Left cardiac atrium (tissue), 4 donors: ENCODE measurements at regions of chr1 and their contacts with region 1.

Region 1: DNA sequence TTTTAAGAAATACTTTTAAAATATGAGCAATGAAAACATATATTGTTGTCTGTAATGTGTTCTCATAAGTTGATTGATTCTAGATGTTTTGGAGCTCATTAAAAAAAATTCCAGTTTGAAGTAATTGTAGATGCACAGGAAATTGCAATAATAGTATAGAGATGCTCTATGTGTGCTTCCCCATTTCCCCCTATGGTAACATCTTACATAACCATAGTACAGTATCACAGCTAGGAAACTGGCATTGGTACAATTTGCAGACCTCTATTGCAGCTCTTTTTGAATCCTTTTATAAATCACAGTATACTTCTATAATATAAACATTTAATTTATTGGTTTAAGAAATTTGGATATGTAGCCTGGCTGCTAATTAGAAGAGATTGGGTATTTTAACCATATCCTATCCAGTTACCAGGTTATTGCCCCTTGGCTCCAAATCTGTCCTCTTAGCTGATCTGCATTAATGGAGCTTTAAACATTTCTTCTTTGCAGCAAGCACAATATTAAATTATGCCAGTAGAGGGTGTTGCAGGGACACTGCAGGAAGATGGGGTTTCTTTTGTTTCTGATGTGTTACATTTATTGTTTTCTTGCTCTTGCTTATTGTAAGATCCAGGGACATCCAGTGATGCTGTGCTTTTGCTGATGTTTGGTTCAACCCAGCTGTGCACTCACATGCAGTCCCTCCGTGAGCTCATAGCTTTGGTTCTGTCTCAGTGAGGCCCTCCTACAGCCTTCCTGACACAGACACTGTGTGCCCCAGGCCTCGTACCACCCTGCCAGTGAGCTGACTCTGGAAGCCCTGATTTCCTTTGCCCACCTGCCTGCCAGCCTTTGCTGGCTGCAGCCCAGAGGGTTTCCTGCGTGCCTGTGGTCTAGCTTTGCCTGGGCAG is 103.3 kb downstream of the RABGAP1L start:
- DNase-seq: no peak
- ATAC-seq: peak; percentile 56 to 57

Region 2: DNA sequence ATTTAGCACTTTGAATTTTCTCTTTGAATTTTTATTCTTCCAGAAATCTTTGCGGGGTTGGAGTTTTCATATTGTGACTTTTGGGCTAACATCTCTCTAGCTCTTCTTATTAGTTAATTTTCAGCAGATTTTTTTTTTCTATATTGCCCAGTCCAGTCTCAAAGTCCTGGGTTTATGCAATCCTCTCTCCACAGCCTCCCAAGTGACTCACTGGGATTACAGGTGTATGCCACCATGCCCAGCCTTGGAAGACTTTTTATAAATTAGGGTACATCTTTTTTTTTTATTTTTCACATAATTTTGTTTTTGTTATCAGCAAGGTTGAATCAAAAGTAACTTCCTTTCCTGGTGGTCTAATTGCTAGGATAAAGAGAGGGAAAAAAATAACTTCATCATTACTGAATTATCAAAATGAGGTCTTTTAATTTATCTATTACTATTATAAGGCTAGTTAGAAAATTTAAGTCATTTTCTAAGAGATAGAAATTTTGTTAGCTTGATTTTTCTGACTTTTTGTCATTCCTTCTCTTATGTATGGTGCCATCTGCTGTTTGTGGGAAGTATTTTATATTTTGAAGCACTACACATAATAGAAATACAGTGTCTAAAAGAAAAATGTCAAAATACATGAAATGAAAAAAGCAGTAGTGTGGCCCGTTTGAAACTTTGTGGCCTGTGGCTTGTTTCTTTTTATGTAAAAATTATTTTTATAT is 463.7 kb after region 1 on chr1:
- intact Hi-C with region 1: loop called (anchors 5 to 10 kb)
- DNase-seq: no peak
- ATAC-seq: no peak

Region 3: GRCh38 chr1:174736831-174737230 is 474.2 kb after region 1 on chr1:
- intact Hi-C with region 1: loop called in 1 of 2 experiments (anchors 10 kb)
- DNase-seq: no peak
- ATAC-seq: no peak

Region 4: GRCh38 chr1:174743654-174744561 is 481.3 kb after region 1 on chr1:
- intact Hi-C with region 1: loop called (anchors 2 to 10 kb)
- DNase-seq: no peak
- ATAC-seq: peak in 1 of 2 donors; percentile 16